Panc1 (cell line): ENCODE measurements at regions of chr10 and their contacts with region 1.

Region 1: DNA sequence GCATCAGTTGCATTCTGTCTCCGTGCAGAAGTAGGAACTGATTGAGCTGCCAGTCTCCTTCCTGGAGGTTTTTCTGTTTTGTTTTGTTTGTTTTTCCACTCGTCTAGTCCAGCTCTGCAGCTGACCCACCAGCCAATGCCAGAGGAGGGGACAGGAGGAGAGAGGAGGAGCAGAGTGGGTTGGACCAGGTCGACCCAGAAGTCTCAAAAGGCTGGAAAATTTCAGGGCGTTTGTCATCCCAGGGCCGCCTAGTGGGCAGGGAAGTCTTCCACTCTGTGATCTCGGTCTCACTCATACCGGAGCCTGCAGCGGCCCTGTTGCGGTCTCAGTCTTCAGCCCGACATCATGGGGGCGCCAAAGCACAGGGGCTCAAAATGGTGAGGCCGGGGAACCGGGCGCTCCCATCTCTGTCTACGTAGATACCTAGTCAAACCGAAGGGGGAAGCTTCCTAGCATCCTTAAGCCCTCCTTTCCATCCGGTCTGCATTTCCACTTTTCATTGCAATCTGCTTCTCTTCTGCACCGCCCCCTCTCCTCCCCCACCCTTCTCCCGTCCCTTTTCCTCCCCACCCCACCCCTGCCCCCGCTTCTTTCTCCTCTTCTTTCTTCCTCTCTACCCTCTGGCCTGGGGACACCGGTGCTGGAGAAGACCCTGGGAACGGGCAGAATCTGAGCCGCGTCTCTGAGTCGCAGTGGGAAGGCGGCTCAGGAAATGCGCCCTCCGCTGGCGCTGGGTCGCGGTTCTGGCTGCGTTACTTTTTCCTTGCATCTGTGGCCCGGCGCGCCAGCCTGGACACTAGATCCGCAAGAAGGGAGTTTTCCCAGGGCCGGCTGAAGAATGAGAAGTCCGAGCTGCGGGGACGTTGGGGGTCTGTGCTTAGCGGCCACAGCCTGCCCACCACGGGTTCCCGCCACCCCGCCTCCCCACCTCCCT is 16.2 kb upstream of the PAX2 start:
- DNase-seq: no peak
- ATAC-seq: peak; percentile 76
- H3K4me3 ChIP-seq: peak overlapping the region; percentile 52 to 79
- H3K27ac ChIP-seq: peak overlapping the region; percentile 99
- H3K4me1 ChIP-seq: peaks cover 40% of the 10 kb centered on the region
- H3K27me3 ChIP-seq: no peaks in the 10 kb centered on the region
- CTCF ChIP-seq: peak; percentile 95

Region 2: GRCh38 chr10:100562008-100562711 is 167.0 kb before region 1 on chr10:
- CTCF ChIA-PET with region 1: interaction called, 5 read pairs
- POLR2A ChIA-PET with region 1: no interaction called
- in situ Hi-C with region 1: no loop called
- intact Hi-C with region 1: loop called (anchors 5 kb)
- DNase-seq: peak; percentile 30
- ATAC-seq: peak; percentile 87
- H3K4me3 ChIP-seq: no peak overlapping the region
- H3K27ac ChIP-seq: no peak overlapping the region
- H3K4me1 ChIP-seq: peaks cover 5% of the 10 kb centered on the region
- H3K27me3 ChIP-seq: no peaks in the 10 kb centered on the region
- CTCF ChIP-seq: peak; percentile 100

Region 3: DNA sequence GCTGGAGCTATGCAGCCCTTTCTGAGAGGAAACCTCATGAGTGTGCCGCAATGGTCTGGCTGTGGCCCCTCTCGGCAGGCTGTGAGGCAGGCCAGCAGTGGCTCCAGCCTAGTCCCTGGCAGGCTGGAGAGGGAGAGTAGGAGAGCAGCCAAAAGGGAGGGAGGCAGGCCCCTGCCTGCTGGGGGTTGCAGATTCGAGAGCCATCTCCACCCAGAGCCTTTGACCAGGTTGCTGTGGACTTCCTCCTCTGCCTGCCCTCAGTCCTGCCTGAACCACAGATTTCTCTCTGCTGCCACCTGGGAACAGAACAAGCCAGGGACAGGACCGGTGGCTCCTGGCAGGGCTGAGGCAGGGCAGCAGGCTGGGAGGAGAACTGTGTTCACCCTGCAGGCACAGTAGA is 30.1 kb after region 1 on chr10:
- CTCF ChIA-PET with region 1: no interaction called
- POLR2A ChIA-PET with region 1: no interaction called
- in situ Hi-C with region 1: no loop called
- intact Hi-C with region 1: no loop called
- DNase-seq: no peak
- ATAC-seq: peak; percentile 75
- H3K4me3 ChIP-seq: no peak overlapping the region
- H3K27ac ChIP-seq: no peak overlapping the region
- H3K4me1 ChIP-seq: no peaks in the 10 kb centered on the region
- H3K27me3 ChIP-seq: no peaks in the 10 kb centered on the region
- CTCF ChIP-seq: no peak

Region 4: DNA sequence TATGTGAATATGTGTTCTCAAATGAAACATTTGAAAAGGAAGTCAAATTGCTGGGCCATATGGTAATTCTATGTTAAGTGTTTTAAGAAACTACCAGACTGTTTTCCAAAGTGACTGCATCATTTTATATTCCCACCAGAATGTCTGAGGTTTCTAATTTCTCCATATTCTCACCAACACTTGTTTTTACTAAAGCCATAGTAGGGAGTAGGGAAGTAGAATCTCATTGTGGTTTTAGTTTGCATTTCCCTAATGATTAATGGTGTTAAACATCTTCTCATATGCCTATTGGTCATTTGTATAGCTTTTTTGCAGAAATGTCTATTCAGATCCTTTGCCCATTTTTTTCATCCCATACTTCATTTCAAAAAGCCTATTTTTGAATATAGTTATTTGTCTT is 231.1 kb after region 1 on chr10:
- CTCF ChIA-PET with region 1: no interaction called
- POLR2A ChIA-PET with region 1: no interaction called
- in situ Hi-C with region 1: no loop called
- intact Hi-C with region 1: no loop called
- DNase-seq: no peak
- ATAC-seq: no peak
- H3K4me3 ChIP-seq: no peak overlapping the region
- H3K27ac ChIP-seq: no peak overlapping the region
- H3K4me1 ChIP-seq: no peaks in the 10 kb centered on the region
- H3K27me3 ChIP-seq: no peaks in the 10 kb centered on the region
- CTCF ChIP-seq: no peak